ENCODE measurements at regions of chr3 and their contacts with region 1.

Region 1: DNA sequence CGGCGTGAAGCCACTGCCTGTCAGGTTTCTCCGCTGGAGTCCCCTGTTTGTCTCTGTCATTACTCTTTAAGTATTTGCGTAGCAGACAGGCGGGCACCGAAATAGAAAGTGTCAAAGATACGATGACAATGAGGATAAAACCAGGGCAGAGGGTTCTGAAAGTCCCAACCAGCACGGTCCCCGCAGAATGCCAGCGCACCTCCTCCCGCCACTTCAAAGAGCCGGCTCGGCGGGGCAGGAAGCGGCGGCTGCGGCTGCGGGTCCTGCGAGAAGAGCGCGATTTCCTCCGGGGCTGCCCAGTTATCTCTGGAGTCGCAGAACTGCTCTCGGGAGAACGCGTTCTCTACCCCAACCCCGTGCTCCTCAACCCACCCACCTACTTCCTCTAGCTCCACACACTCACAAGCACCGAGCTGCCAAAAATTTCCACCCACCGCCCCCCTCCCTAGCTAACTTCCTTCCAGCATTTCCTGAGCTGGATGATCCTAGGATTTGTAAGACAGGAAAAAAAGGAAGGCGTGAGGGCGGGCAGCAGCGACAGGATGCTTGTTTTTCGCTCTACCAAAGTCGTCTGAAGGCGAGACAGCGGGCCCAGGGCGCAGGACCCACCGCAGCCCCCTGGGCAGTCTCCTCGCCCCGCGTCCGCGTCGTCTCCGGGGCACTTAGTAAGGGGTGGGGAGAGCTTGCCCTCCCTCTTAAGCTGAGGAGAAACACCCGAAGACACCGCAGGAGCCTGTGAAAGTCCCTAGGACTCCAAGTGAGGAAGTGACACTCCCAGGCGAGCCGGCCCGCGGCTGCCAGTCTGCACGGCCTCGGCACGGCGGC is at the start of gene ARHGAP31:
- DNase-seq: peak; percentile 93
- ATAC-seq: peak; percentile 78
- H3K4me3 Mint-ChIP-seq: peak within 1 kb of the TSS; percentile 82
- H3K27ac Mint-ChIP-seq: peak within 1 kb of the TSS; percentile 93
- H3K4me1 Mint-ChIP-seq: peaks cover 52% of the 10 kb centered on the region
- H3K27me3 Mint-ChIP-seq: no peaks in the 10 kb centered on the region
- total RNA-seq, gene ARHGAP31: 9.2 to 9.6 TPM

Region 2: DNA sequence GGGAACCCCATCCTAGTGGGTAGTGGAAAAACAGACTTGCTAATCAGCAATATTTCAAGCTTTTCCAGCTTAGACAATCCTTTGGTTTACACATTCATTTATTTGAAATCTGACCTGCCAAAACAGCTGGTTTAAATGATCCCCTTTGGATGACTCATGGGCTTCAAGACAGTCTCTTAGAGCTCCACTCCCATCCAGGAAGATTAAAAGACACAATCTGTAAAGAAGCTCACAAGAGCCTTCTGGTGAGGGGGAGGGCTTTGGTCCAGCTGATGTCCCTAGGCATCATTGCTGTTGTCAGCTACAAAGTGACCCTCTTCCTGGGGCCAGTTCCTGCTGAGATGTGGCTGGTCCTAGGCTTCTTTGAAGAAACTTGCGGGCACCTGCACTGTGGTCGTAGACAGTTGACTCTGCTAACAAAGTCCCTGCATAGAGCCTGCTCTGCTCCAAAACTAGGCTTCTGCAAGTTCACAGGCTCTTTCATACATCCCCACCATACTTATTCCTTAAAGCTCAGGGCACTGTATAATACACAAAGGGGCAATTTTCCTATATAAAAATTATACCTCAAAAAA is 333.1 kb before region 1 on chr3:
- CTCF ChIA-PET with region 1: no interaction called
- POLR2A ChIA-PET with region 1: no interaction called
- intact Hi-C with region 1: no loop called
- DNase-seq: no peak
- ATAC-seq: no peak
- H3K4me3 Mint-ChIP-seq: no peak overlapping the region
- H3K27ac Mint-ChIP-seq: no peak overlapping the region
- H3K4me1 Mint-ChIP-seq: peaks cover 18% of the 10 kb centered on the region
- H3K27me3 Mint-ChIP-seq: no peaks in the 10 kb centered on the region

Region 3: DNA sequence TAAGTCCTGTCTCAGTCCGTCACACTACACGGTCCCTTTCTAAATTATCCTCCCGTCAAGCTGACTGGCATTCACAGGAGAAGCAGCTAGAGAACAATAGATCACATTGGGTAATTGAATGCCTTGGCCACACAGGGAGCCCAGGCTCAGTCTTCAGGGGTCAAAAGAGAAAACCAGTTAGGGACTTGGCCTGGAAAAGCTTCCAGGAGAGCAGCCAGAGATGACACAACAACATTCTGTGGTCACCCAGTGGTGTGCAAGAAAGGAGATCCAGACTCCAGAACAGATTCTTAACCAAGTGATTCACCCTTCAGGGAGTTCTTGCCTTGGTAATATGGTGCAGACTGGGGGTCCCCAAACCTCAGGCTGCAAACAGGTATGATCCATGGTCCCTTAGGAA is 16.0 kb after region 1 on chr3:
- CTCF ChIA-PET with region 1: interaction called, 3 read pairs
- POLR2A ChIA-PET with region 1: interaction called, 4 read pairs
- intact Hi-C with region 1: loop called in 1 of 2 experiments (anchors 1 kb)
- DNase-seq: no peak
- ATAC-seq: no peak
- H3K4me3 Mint-ChIP-seq: no peak overlapping the region
- H3K27ac Mint-ChIP-seq: no peak overlapping the region
- H3K4me1 Mint-ChIP-seq: peaks cover 23% of the 10 kb centered on the region
- H3K27me3 Mint-ChIP-seq: no peaks in the 10 kb centered on the region

Region 4: DNA sequence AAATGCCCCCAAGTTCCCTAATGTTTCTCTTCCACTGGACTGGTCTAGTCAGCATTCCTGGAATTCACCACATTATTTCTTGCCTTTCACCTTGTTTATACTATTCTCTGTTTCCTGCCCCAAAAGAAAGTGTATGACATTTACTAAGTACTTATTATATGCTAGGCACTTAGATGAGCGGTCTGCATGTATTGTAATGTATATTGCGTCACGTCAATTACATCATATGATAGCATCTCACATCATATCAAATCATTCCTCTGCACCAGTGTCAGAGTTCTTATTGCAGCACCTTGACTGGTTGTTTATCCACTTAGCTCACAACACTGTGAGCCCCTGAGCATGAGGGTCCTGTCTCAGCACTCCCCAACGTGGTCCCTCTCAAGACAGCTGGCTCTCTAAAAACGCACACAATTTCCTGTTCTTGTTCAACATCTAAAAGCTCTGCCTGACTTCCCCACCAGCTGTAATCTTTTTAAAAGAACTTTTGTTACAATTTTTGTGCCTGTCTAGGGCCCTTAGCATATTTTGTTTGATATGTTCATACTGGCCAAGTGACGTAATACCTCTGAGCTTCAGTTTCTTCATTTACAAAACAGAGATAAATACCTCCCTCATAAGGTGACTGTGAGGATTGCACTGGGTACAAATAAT is 58.9 kb after region 1 on chr3:
- CTCF ChIA-PET with region 1: interaction called, 8 read pairs
- POLR2A ChIA-PET with region 1: interaction called, 4 read pairs
- intact Hi-C with region 1: loop called (anchors 1 to 5 kb)
- DNase-seq: no peak
- ATAC-seq: peak; percentile 63
- H3K4me3 Mint-ChIP-seq: no peak overlapping the region
- H3K27ac Mint-ChIP-seq: peak overlapping the region; percentile 32
- H3K4me1 Mint-ChIP-seq: peaks cover 34% of the 10 kb centered on the region
- H3K27me3 Mint-ChIP-seq: no peaks in the 10 kb centered on the region

Region 5: DNA sequence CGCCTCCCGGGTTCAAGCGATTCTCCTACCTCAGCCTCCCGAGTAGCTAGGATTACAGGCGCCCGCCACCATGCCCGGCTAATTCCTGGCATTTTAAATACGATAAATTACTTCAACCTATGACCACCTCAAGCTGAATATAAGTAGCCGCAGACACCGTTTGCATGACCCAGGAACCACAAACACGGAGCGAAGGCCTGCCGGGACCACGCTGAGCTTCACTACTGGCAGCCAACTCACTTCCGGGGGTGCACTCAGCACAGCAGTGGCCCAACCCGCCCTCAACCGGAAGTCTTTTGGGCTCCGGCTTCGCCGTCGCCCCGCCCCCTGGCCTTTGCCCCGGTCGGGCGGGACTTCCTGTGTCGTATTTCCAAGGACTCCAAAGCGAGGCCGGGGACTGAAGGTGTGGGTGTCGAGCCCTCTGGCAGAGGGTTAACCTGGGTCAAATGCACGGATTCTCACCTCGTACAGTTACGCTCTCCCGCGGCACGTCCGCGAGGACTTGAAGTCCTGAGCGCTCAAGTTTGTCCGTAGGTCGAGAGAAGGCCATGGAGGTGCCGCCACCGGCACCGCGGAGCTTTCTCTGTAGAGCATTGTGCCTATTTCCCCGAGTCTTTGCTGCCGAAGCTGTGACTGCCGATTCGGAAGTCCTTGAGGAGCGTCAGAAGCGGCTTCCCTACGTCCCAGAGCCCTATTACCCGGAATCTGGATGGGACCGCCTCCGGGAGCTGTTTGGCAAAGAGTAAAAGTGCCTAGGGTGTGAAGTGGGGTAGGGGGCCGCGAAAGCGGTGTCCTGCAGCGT is 204.3 kb after region 1 on chr3 and contains the start of gene TIMMDC1:
- CTCF ChIA-PET with region 1: no interaction called
- POLR2A ChIA-PET with region 1: interaction called, 3 read pairs
- intact Hi-C with region 1: loop called (anchors 1 to 10 kb)
- DNase-seq: peak; percentile 99
- ATAC-seq: peak; percentile 99
- H3K4me3 Mint-ChIP-seq: peak within 1 kb of the TSS; percentile 96
- H3K27ac Mint-ChIP-seq: peak within 1 kb of the TSS; percentile 99
- H3K4me1 Mint-ChIP-seq: peaks cover 39% of the 10 kb centered on the region
- H3K27me3 Mint-ChIP-seq: no peaks in the 10 kb centered on the region
- total RNA-seq, gene TIMMDC1: 82.3 to 96.0 TPM

Region 6: DNA sequence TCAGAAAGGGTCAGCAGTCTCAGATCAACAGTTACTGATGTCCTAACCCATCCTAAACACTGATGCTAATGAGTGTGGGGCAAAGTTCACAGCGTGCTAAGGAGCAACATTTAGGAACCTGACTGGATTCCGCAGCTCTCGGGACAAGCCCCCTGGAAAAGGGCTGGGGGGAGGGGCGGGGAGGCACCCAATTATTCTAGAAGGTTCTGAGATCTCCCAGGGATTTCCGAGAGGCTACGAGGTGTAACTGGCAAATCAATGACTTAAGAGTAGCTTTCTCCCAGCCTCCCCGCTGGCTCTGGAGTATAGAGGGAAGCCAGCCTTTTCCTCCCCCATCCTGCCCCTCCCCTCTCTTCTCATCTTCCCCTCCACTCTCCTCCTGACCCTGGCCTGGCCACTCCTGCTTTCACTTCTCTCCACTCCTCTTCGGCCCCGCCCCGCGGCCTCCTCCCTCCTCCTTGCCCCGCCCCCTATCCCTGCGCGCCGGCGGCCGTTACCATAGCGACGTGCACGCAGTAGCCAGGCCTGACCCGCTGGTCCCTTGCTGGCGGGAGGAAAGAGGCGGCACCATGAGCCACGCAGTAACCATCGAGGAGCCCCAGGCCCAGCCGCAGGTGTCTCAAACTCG is 408.6 kb after region 1 on chr3 and contains the start of gene CFAP91:
- CTCF ChIA-PET with region 1: no interaction called
- POLR2A ChIA-PET with region 1: no interaction called
- intact Hi-C with region 1: loop called in 1 of 2 experiments (anchors 5 kb)
- DNase-seq: peak; percentile 90
- ATAC-seq: peak; percentile 86
- H3K4me3 Mint-ChIP-seq: peak within 1 kb of the TSS; percentile 67
- H3K27ac Mint-ChIP-seq: peak within 1 kb of the TSS; percentile 59
- H3K4me1 Mint-ChIP-seq: peaks cover 39% of the 10 kb centered on the region
- H3K27me3 Mint-ChIP-seq: peaks cover 5% of the 10 kb centered on the region
- total RNA-seq, gene CFAP91: 0.25 to 0.67 TPM

Measured in activated CD4-positive, alpha-beta T cell treated with anti-CD3 and anti-CD28 coated beads for 36 hours (primary cell).